ENCODE measurements at regions of chr22 and their contacts with region 1.

Region 1: DNA sequence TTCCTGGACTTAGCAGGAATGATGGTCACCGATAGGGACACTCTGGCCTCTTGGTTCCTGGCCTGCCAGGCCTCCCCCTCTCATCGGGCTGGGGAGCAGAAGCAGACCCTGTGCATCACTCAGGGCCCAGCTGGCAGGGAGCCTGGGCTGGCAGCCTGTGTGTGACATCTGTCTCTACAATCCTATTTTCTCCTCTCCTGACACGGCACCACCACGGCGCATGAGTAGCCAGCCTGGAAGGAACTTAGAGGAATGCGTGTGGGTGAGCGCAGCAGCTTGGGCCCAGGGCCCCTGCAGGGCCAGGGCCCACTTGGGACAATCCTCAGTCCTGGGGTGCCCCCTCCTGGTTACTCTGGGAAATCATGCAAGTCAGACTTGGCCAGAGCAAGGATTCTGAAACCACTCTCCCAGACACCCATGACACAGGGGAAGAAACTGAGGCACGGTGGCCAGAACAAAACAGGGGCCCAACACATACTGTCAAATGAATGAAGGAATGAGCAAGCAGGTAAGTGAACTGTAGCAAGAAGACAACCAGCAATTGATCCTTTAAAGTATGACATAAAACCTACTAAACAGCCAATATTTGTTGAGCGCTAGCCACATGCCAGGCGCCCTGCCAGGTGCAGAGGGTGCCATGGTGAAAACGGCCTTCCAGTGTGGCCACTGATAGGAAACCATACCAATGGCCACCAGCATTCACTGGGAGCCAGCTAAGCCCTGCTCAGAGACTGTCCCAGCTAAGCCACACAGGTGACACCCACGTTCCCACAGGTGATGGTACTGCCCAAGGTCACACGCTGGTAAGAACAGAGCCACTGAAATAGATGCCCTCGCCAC is 13.3 kb downstream of the RSPH14 start:
- DNase-seq: peak; percentile 57 to 76
- ATAC-seq: peak; percentile 83 to 93 (median 90)
- H3K4me3 ChIP-seq: no peak overlapping the region
- H3K27ac ChIP-seq: no peak overlapping the region
- H3K4me1 ChIP-seq: peaks cover 0 to 11% (median 7%) of the 10 kb centered on the region in 9 donors
- H3K27me3 ChIP-seq: peaks cover 0 to 6% (median 0%) of the 10 kb centered on the region in 7 donors
- CTCF ChIP-seq: peak; percentile 62 to 87 (median 83)

Region 2: GRCh38 chr22:22342697-22343580 is 785.5 kb before region 1 on chr22:
- intact Hi-C with region 1: loop called in 1 of 10 experiments (anchors 10 kb)
- DNase-seq: peak in 1 of 2 donors; percentile 31
- ATAC-seq: peak in 2 of 8 donors; percentile 35 to 68
- H3K4me3 ChIP-seq: no peak overlapping the region
- H3K27ac ChIP-seq: no peak overlapping the region
- H3K4me1 ChIP-seq: peaks cover 0 to 15% (median 0%) of the 10 kb centered on the region in 9 donors
- H3K27me3 ChIP-seq: peaks cover 0 to 51% (median 27%) of the 10 kb centered on the region in 7 donors
- CTCF ChIP-seq: peak; percentile 63 to 90 (median 73)

Region 3: GRCh38 chr22:22463855-22464540 is 664.5 kb before region 1 on chr22:
- intact Hi-C with region 1: loop called in 1 of 10 experiments (anchors 10 kb)
- DNase-seq: peak in 1 of 2 donors; percentile 51
- ATAC-seq: peak in 5 of 8 donors; percentile 55 to 68 (median 60)
- H3K4me3 ChIP-seq: no peak overlapping the region
- H3K27ac ChIP-seq: no peak overlapping the region
- H3K4me1 ChIP-seq: no peaks in the 10 kb centered on the region
- H3K27me3 ChIP-seq: peaks cover 0 to 67% (median 50%) of the 10 kb centered on the region in 7 donors
- CTCF ChIP-seq: peak; percentile 61 to 85 (median 72)

Region 4: GRCh38 chr22:22593964-22594656 is 534.4 kb before region 1 on chr22:
- intact Hi-C with region 1: loop called in 1 of 10 experiments (anchors 10 kb)
- DNase-seq: peak in 1 of 2 donors; percentile 23
- ATAC-seq: no peak
- H3K4me3 ChIP-seq: no peak overlapping the region
- H3K27ac ChIP-seq: no peak overlapping the region
- H3K4me1 ChIP-seq: no peaks in the 10 kb centered on the region
- H3K27me3 ChIP-seq: peaks cover 0 to 28% (median 4%) of the 10 kb centered on the region in 7 donors
- CTCF ChIP-seq: peak; percentile 19 to 73 (median 56)

Region 5: DNA sequence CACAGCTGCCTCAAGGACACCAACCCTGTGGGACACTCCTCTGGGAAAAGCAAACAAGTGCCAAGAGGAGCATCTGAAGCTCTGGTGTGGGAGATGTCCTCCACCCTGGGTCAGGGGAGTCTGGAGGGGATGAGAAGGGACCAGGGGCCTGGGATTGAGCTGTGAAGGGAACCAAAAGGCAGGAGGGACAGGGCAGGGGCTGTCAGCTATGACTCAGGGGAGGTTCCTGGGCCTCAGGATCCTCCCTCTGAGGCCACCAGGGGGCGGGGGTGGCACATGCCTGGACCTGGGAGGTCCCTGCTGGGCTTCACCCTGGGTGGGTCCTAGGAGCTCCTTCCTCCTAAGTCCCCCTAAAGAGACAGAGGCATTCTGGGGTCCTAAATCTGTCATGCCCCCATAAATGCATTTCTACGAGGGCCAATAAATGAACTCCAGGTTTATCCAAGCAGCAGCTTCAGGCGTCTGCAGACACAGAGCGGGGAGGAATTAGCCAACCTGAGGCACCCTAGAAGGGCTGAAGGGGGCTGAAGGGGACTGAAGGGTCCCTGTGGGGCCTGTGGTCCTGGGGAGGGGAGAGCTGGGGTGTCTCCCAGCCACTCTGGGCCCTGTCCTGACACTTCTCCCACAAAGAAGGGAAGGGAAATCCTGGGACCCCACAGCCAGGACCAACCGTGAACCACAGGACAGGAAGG is 272.7 kb before region 1 on chr22:
- intact Hi-C with region 1: loop called in 1 of 10 experiments (anchors 10 kb)
- DNase-seq: no peak
- ATAC-seq: peak in 1 of 8 donors; percentile 51
- H3K4me3 ChIP-seq: no peak overlapping the region
- H3K27ac ChIP-seq: no peak overlapping the region
- H3K4me1 ChIP-seq: no peaks in the 10 kb centered on the region
- H3K27me3 ChIP-seq: peaks cover 0 to 66% (median 47%) of the 10 kb centered on the region in 7 donors
- CTCF ChIP-seq: peak in 7 of 9 donors; percentile 10 to 55 (median 19)

Region 6: GRCh38 chr22:23301591-23301990 is 173.1 kb after region 1 on chr22:
- intact Hi-C with region 1: no loop called
- DNase-seq: peak in 1 of 2 donors; percentile 1
- ATAC-seq: no peak
- H3K4me3 ChIP-seq: no peak overlapping the region
- H3K27ac ChIP-seq: no peak overlapping the region
- H3K4me1 ChIP-seq: peaks cover 10 to 22% (median 20%) of the 10 kb centered on the region in 9 donors
- H3K27me3 ChIP-seq: no peaks in the 10 kb centered on the region
- CTCF ChIP-seq: no peak

Measured in heart right ventricle (tissue), 16 donors.